Common myeloid progenitor, CD34-positive (primary cell): ENCODE measurements at regions of chr2 and their contacts with region 1.

Region 1: DNA sequence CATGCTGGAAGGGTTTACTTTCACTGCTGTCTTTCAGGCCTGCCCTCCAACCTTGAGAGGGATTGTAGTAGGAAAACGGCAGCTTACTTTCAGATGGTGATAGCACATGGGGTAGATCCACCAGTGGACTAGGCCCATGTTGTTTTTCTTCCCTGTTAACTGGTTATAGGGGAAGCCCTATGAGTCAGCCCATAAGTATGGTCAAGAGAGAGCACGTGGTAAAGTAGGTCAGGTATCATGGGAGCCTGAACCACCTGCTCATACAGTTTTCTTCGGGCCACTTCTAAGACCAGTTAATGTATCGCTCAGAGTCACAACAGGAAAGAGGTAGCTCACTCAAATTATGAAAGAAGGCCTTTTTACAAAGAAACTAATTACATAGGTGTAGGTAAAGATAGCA is 33.0 kb downstream of the PDK1 start:
- DNase-seq: no peak
- H3K4me3 ChIP-seq: no peak overlapping the region
- H3K27ac ChIP-seq: no peak overlapping the region
- H3K4me1 ChIP-seq: peaks cover 0 to 4% (median 0%) of the 10 kb centered on the region in 4 experiments
- H3K27me3 ChIP-seq: peaks cover 0 to 55% (median 11%) of the 10 kb centered on the region in 5 experiments

Region 2: GRCh38 chr2:172555522-172556283 is 33.2 kb before region 1 on chr2 and contains the start of gene PDK1:
- CTCF ChIA-PET with region 1: no interaction called
- POLR2A ChIA-PET with region 1: no interaction called
- DNase-seq: peak; percentile 86 to 93 (median 93)
- H3K4me3 ChIP-seq: peak within 1 kb of the TSS; percentile 71 to 86 (median 81)
- H3K27ac ChIP-seq: peak within 1 kb of the TSS in 1 of 2 experiments; percentile 66
- H3K4me1 ChIP-seq: peaks cover 12 to 40% (median 18%) of the 10 kb centered on the region in 4 experiments
- H3K27me3 ChIP-seq: peaks cover 0 to 20% (median 0%) of the 10 kb centered on the region in 5 experiments

Region 3: GRCh38 chr2:172624996-172625395 is 36.1 kb after region 1 on chr2:
- CTCF ChIA-PET with region 1: interaction called, 3 read pairs
- POLR2A ChIA-PET with region 1: interaction called, 12 read pairs
- DNase-seq: no peak
- H3K4me3 ChIP-seq: no peak overlapping the region
- H3K27ac ChIP-seq: no peak overlapping the region
- H3K4me1 ChIP-seq: no peaks in the 10 kb centered on the region
- H3K27me3 ChIP-seq: peaks cover 0 to 8% (median 0%) of the 10 kb centered on the region in 5 experiments

Region 4: GRCh38 chr2:172674034-172674967 is 85.4 kb after region 1 on chr2:
- CTCF ChIA-PET with region 1: interaction called, 10 read pairs
- POLR2A ChIA-PET with region 1: no interaction called
- DNase-seq: peak; percentile 40 to 55 (median 41)
- H3K4me3 ChIP-seq: peak overlapping the region in 4 of 7 experiments; percentile 3 to 37 (median 26)
- H3K27ac ChIP-seq: no peak overlapping the region
- H3K4me1 ChIP-seq: peaks cover 0 to 6% (median 3%) of the 10 kb centered on the region in 4 experiments
- H3K27me3 ChIP-seq: peaks cover 0 to 32% (median 11%) of the 10 kb centered on the region in 5 experiments

Region 5: DNA sequence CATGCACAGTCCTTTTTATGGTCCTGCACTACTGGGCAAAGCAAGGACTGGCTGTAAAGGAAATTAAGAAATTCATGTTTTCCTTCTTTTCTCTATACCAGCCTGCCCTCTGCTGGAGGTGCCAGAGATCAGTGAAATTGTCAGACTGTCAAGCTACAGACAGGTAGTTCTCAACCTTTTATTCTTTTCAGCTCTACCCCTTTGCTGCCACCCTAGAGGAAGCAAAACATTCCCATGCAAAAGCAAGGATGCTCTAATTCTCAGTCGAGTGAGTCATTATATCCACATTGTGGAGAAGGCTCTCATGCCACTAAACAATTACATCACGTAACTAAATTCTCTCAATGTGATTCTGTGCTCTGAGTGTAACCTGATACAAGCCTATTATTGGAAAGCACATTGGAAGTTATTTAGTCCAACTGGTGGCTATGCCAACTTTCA is 121.7 kb after region 1 on chr2:
- CTCF ChIA-PET with region 1: interaction called, 23 read pairs
- POLR2A ChIA-PET with region 1: no interaction called
- DNase-seq: peak; percentile 40 to 55 (median 41)
- H3K4me3 ChIP-seq: no peak overlapping the region
- H3K27ac ChIP-seq: no peak overlapping the region
- H3K4me1 ChIP-seq: no peaks in the 10 kb centered on the region
- H3K27me3 ChIP-seq: peaks cover 0 to 59% (median 21%) of the 10 kb centered on the region in 5 experiments